Mammary epithelial cell (primary cell): ENCODE measurements at regions of chr12 and their contacts with region 1.

Region 1: DNA sequence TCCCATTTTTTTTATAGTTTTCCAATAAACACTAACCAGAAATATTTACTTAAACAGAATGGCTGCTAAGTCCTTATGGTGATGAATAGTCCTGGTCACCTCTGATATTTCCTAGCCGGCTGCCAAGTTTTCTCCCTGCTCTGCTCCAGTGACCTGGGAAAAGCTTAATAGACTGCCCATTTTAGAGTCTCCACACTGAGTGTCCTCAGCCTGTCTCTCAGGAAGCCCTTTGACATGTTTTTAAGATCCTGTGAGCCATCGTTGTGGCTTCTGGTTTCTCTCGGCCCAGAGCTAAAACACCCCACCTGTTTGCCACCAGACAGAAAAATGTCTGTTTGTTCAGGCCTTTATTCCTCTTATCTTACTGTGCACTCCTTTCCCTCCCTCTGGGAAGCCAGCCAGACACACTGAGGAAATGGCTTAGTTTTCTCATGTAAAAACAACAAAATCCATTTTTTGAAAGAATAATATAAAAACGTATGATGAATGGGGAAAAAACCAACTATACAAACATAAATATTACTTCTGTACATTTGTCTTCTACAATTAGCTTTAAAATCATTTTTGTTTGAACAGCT is 25.4 kb upstream of the ALDH2 start:
- DNase-seq: no peak
- H3K4me3 ChIP-seq: no peak overlapping the region
- H3K27ac ChIP-seq: no peak overlapping the region
- H3K4me1 ChIP-seq: no peaks in the 10 kb centered on the region
- H3K27me3 ChIP-seq: no peaks in the 10 kb centered on the region
- CTCF ChIP-seq: no peak

Region 2: DNA sequence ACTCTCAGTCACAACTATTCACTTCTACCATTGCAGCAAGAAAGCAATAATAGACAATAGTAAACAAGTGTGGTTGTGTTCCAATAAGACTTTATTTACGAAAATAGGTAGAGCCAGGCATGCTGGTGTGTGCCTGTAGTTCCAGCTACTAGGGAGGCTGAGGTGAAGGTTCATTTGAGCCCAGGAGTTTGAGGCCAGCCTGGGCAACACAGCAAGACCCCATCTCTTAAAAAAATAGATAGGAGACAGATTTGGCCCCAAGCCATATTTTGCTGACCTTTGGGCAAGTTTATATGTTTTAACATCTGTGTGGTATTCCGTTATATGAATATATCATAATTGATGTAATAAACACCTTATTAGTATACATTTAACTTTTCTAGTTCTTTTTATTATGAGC is 41.4 kb before region 1 on chr12:
- CTCF ChIA-PET with region 1: no interaction called
- dilution Hi-C with region 1: loop called (anchors 5 kb)
- in situ Hi-C with region 1: no loop called
- intact Hi-C with region 1: no loop called
- DNase-seq: no peak
- H3K4me3 ChIP-seq: no peak overlapping the region
- H3K27ac ChIP-seq: no peak overlapping the region
- H3K4me1 ChIP-seq: no peaks in the 10 kb centered on the region
- H3K27me3 ChIP-seq: no peaks in the 10 kb centered on the region
- CTCF ChIP-seq: no peak

Region 3: DNA sequence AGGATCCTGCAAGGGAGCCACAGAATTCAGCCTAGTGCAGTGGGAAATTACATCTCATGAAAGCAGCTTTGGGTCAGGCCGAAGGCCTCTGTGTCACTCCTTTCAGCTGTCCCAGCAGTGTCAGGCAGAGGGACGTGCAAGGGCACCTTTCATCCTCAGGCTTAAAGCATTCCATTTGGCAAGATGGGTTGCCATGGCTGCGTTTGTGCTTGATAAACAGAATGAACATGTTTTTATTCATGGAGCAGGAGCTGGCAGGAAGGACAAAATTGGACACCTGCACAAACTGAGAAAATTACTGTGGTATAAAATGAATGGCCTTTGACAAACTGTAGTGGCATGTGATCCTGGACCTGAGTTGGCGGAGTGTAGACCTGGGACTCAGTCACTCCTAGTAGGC is 26.0 kb before region 1 on chr12:
- CTCF ChIA-PET with region 1: no interaction called
- dilution Hi-C with region 1: no loop called
- in situ Hi-C with region 1: no loop called
- intact Hi-C with region 1: no loop called
- DNase-seq: no peak
- H3K4me3 ChIP-seq: no peak overlapping the region
- H3K27ac ChIP-seq: no peak overlapping the region
- H3K4me1 ChIP-seq: no peaks in the 10 kb centered on the region
- H3K27me3 ChIP-seq: no peaks in the 10 kb centered on the region
- CTCF ChIP-seq: no peak

Region 4: GRCh38 chr12:111775205-111776193 is 34.2 kb after region 1 on chr12:
- CTCF ChIA-PET with region 1: no interaction called
- dilution Hi-C with region 1: loop called (anchors 5 kb)
- in situ Hi-C with region 1: no loop called
- intact Hi-C with region 1: no loop called
- DNase-seq: peak; percentile 39
- H3K4me3 ChIP-seq: no peak overlapping the region
- H3K27ac ChIP-seq: no peak overlapping the region
- H3K4me1 ChIP-seq: peaks cover 25% of the 10 kb centered on the region
- H3K27me3 ChIP-seq: no peaks in the 10 kb centered on the region
- CTCF ChIP-seq: no peak